HCT116 (cell line): ENCODE measurements at regions of chrX and their contacts with region 1.

Region 1: DNA sequence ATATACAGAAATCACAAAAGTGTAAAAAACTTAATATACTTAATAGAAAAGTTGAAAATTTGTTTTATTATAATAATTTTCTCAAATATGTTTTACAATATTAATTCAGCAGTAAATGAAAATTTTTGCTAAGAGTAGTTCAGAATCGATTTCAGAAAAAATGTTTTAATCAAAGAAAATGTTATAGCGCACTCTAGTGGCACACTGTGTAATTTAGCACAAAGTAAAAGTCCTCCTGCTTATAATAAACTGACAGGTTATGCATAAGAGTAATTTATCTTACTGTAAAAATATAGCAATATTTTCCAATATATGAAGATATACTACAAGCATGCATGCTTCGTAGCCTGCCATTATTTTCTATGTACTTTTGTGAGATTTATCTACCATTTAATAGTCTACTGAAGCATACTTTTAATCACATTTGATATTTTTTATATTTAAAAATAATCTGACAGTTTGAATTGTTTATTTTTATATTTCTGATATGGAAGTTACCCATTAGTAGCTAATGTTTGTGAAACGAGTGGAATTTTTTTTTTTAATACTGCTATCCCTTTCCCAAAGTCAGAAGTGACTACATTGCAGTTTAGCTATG is 217.9 kb upstream of the KLHL4 start:
- DNase-seq: no peak
- ATAC-seq: no peak
- H3K4me3 ChIP-seq: no peak overlapping the region
- H3K27ac ChIP-seq: no peak overlapping the region
- H3K4me1 ChIP-seq: no peaks in the 10 kb centered on the region
- H3K27me3 ChIP-seq: no peaks in the 10 kb centered on the region
- CTCF ChIP-seq: 0 out of 6 replicates have a peak, but pooled peaks of 2 of the 3 experiments have one; percentile 15 to 23
- POLR2A ChIP-seq: no peak
- RAD21 ChIP-seq: 0 out of 2 replicates have a peak, but pooled peaks have one; percentile 16

Region 2: GRCh38 chrX:85611926-85612325 is 1687.7 kb before region 1 on chrX:
- CTCF ChIA-PET with region 1: no interaction called
- POLR2A ChIA-PET with region 1: no interaction called
- RAD21 ChIA-PET with region 1: no interaction called
- intact Hi-C with region 1: loop called (anchors 5 kb)
- DNase-seq: no peak
- ATAC-seq: no peak
- H3K4me3 ChIP-seq: no peak overlapping the region
- H3K27ac ChIP-seq: no peak overlapping the region
- H3K4me1 ChIP-seq: no peaks in the 10 kb centered on the region
- H3K27me3 ChIP-seq: no peaks in the 10 kb centered on the region
- CTCF ChIP-seq: peak in 1 of 3 experiments; percentile 33; a peak in 2 of 6 replicates
- POLR2A ChIP-seq: no peak
- RAD21 ChIP-seq: 0 out of 2 replicates have a peak, but pooled peaks have one; percentile 15

Region 3: DNA sequence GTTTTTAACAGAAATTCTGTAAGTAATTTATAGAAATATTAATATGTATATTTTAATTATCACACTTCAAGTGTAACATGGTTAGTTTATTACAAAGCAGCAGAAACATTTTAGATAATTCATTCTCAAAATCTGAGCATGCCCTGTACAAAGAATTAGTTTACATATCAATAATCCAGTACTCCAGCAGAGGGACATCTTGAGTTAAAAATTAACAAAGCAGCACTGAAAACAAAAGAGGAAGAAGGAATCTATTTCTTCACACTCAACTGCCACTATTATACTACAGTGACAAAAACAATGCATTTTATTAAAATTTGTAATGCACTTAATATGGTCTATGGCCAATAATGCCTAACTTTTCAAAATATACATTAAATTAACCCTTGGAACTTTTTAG is 38.8 kb after region 1 on chrX:
- CTCF ChIA-PET with region 1: no interaction called
- POLR2A ChIA-PET with region 1: no interaction called
- RAD21 ChIA-PET with region 1: no interaction called
- intact Hi-C with region 1: no loop called
- DNase-seq: no peak
- ATAC-seq: no peak
- H3K4me3 ChIP-seq: no peak overlapping the region
- H3K27ac ChIP-seq: no peak overlapping the region
- H3K4me1 ChIP-seq: no peaks in the 10 kb centered on the region
- H3K27me3 ChIP-seq: no peaks in the 10 kb centered on the region
- CTCF ChIP-seq: no peak
- POLR2A ChIP-seq: no peak
- RAD21 ChIP-seq: no peak